ENCODE measurements at regions of chr14 and their contacts with region 1.

Region 1: GRCh38 chr14:95534299-95535225 is at the start of gene GLRX5:
- DNase-seq: peak in 1 of 2 donors; percentile 100
- H3K4me3 ChIP-seq: peak within 1 kb of the TSS; percentile 94 to 96
- H3K27ac ChIP-seq: peak within 1 kb of the TSS; percentile 85
- H3K4me1 ChIP-seq: peaks cover 76% of the 10 kb centered on the region
- H3K27me3 ChIP-seq: no peaks in the 10 kb centered on the region
- CTCF ChIP-seq: no peak
- POLR2A ChIP-seq: peak in 1 of 2 donors; percentile 56
- total RNA-seq, gene GLRX5: 20.4 TPM

Region 2: DNA sequence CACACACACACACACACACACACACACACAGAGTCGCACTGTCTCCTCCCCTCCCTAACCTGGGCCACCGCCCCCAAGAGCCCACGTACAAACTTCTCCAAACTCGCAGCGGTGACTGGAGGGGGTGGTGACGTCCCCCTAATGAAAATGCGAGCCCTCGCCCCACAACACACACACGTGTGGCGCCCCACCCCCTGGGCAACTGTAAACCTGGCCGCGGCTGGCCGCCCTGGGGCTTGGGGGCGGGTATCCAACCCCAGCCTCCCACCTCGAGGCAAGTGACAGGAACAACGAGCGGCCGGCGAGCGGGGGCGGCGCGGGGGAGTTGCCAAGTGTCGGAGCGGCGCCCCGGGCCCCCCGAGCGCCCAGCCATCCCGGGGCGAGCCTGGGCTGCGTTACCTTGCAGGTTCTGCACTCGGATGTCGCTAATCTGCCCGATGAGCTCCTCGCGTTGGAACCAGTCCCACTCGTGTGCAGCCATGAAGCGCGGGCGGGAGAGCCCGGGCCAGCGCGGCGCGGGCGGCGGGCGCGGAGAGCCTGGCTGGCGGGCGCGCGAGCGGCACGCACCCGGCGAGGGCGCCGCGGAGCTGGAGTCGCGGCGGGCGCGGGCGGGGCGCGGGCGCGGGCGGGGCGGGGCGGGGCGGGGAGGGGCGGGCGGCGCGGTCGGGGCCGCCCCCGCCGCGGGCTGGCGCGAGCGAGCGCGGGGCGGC is 215.1 kb before region 1 on chr14 and contains the start of gene CLMN:
- intact Hi-C with region 1: loop called (anchors 10 kb)
- DNase-seq: no peak
- H3K4me3 ChIP-seq: peak within 1 kb of the TSS; percentile 88 to 89
- H3K27ac ChIP-seq: peak within 1 kb of the TSS; percentile 93
- H3K4me1 ChIP-seq: peaks cover 47% of the 10 kb centered on the region
- H3K27me3 ChIP-seq: no peaks in the 10 kb centered on the region
- CTCF ChIP-seq: no peak
- POLR2A ChIP-seq: no peak
- total RNA-seq, gene CLMN: 19.6 TPM

Region 3: DNA sequence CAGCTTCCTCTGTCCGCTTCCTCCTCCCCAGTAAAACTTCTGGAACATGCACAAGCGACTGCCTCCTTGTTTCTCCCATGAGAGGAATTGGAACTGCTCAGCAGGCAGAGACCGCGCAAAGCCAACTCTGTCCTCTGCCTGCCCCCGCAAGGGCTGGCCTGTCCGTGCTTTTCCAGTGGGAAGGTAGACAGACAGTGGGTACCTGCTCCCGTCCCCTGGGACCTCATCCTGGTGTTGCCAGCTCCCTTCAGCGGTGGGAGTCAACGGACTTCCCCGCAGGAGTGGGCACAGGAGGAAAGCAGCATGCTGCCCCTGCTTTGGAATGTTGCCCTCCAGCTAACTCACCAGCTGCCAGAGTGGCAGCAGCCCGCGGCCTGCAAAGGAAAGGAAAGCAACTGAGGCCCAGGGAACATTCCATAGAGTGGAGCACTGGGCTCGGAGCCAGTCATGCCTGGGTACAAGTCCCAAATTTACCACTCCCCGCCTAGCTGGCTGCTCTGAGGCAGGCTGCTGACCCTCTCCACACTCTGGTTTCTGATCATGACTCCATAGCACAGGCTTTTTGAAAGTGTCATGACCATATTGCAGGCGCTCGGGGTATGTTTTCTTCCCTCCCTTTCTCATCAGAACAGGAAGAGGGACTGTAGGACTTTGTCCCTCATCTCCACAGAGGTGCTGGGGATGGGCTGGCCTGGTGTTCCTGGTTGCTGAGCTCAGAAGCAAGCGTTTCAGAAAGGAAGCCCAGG is 125.7 kb before region 1 on chr14:
- intact Hi-C with region 1: no loop called
- DNase-seq: no peak
- H3K4me3 ChIP-seq: no peak overlapping the region
- H3K27ac ChIP-seq: peak overlapping the region; percentile 62
- H3K4me1 ChIP-seq: peaks cover 20% of the 10 kb centered on the region
- H3K27me3 ChIP-seq: no peaks in the 10 kb centered on the region
- CTCF ChIP-seq: no peak
- POLR2A ChIP-seq: no peak

Region 4: DNA sequence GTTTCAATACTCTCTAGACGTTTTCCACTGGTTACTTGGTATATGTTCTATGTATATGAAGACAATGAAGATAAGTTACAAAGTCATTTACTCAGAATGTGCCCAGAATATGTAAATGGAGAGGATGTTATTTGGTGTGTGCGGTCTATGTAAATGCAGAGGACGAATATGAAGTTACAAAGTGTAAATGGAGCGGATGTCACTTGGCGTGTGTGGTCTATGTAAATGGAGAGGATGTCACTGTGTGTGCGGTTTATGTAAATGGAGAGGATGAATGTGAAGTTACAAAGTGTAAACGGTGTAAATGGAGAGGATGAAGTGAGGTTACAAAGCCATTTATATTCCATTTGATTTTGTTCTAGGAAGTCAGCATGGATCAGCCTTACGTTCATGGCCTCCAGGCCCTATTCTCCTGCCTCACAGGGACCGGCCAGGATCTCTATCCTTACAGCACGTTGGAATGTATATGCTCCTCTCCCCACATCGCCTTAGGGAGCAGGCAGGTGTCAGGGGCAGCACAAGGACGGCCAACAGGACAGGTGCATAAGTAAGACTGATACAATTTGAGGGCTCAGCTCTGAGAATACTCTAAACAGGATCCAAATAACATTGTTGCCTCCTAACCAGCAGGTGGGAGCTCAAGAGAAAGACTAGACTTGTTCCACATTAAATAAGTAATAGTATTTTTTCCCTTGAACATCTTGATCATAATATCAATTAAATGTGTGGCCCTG is 42.7 kb after region 1 on chr14:
- intact Hi-C with region 1: no loop called
- DNase-seq: no peak
- H3K4me3 ChIP-seq: no peak overlapping the region
- H3K27ac ChIP-seq: no peak overlapping the region
- H3K4me1 ChIP-seq: no peaks in the 10 kb centered on the region
- H3K27me3 ChIP-seq: no peaks in the 10 kb centered on the region
- CTCF ChIP-seq: no peak
- POLR2A ChIP-seq: no peak